GM12878 (cell line): ENCODE measurements at regions of chr15 and their contacts with region 1.

Region 1: GRCh38 chr15:50558012-50558411 is 11.5 kb upstream of the USP50 start:
- DNase-seq: no peak
- ATAC-seq: peak; percentile 53; the same call in 2 of the 3 replicates
- H3K4me3 ChIP-seq: no peak overlapping the region
- H3K27ac ChIP-seq: no peak overlapping the region
- H3K4me1 ChIP-seq: peaks cover 5% of the 10 kb centered on the region; the same call in 1 of the 2 replicates
- H3K27me3 ChIP-seq: no peaks in the 10 kb centered on the region
- CTCF ChIP-seq: no peak
- EP300 ChIP-seq: no peak
- POLR2A ChIP-seq: no peak
- RAD21 ChIP-seq: no peak

Region 2: DNA sequence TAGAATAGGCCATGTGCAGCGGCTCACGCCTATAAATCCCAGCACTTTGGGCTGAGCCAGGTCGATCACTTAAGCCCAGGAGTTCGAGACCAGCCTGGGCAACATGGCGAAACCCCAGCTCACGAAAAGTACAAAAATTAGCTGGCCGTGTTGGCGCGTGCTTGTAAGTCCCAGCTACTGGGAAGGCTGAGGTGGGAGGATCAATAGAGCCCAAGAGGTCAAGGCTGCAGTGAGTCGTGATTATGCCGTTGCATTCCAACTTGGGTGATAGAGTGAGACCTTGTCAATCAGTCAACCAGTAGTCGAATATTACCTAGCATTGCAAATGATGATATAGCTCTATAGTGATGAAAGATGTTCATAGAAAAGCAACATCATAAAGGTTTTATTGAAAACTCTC is 81.9 kb before region 1 on chr15:
- CTCF ChIA-PET with region 1: no interaction called
- POLR2A ChIA-PET with region 1: no interaction called
- RAD21 ChIA-PET with region 1: no interaction called
- SMC1A ChIA-PET with region 1: no interaction called
- in situ Hi-C with region 1: no loop called
- intact Hi-C with region 1: no loop called
- DNase-seq: no peak
- ATAC-seq: no peak
- H3K4me3 ChIP-seq: no peak overlapping the region
- H3K27ac ChIP-seq: no peak overlapping the region
- H3K4me1 ChIP-seq: no peaks in the 10 kb centered on the region
- H3K27me3 ChIP-seq: no peaks in the 10 kb centered on the region
- CTCF ChIP-seq: no peak
- EP300 ChIP-seq: no peak
- POLR2A ChIP-seq: no peak
- RAD21 ChIP-seq: no peak

Region 3: DNA sequence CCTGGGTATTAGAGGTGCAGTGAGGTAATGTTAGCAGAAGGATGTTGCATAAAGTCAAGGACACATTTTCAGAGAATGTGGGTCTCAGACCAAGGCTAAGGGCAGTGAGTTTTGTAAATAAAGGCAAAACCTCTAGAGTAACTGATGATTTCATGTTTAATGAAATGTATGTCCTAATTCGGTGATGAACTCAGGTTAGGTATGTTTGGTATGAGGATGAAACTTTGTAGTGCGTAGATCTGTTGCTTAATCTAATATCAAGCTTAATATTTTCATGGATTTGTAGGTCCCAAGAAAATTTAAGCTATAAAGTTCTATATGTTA is 15.2 kb before region 1 on chr15:
- CTCF ChIA-PET with region 1: no interaction called
- POLR2A ChIA-PET with region 1: interaction called, 10 read pairs
- RAD21 ChIA-PET with region 1: no interaction called
- SMC1A ChIA-PET with region 1: interaction called, 4 read pairs
- in situ Hi-C with region 1: no loop called
- intact Hi-C with region 1: no loop called
- DNase-seq: no peak
- ATAC-seq: no peak
- H3K4me3 ChIP-seq: no peak overlapping the region; the same call in 1 of the 2 replicates
- H3K27ac ChIP-seq: no peak overlapping the region
- H3K4me1 ChIP-seq: peaks cover 7% of the 10 kb centered on the region
- H3K27me3 ChIP-seq: no peaks in the 10 kb centered on the region
- CTCF ChIP-seq: no peak
- EP300 ChIP-seq: no peak
- POLR2A ChIP-seq: no peak
- RAD21 ChIP-seq: no peak